Cardiac septum (tissue), 1 donor: ENCODE measurements at regions of chr4 and their contacts with region 1.

Region 1: DNA sequence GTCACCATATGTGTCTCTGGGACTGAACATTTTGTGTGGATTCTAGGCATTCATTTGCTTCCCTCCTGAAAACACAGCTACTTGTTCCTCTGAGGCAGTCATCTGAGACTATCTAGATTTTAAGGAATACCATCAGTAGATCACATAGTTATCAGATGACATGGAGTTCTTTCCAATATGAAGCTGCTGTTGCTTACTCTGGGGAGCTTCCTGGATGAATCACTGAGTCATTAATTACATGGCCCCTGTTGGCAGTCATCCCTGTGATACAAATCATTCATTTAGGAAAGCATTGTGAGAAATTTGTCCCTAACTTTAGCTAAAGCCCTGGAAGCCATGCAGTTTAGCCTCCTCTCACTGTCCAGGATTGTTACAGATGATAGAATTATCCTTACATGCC is 98.2 kb upstream of the ARSJ start:
- DNase-seq: no peak

Region 2: DNA sequence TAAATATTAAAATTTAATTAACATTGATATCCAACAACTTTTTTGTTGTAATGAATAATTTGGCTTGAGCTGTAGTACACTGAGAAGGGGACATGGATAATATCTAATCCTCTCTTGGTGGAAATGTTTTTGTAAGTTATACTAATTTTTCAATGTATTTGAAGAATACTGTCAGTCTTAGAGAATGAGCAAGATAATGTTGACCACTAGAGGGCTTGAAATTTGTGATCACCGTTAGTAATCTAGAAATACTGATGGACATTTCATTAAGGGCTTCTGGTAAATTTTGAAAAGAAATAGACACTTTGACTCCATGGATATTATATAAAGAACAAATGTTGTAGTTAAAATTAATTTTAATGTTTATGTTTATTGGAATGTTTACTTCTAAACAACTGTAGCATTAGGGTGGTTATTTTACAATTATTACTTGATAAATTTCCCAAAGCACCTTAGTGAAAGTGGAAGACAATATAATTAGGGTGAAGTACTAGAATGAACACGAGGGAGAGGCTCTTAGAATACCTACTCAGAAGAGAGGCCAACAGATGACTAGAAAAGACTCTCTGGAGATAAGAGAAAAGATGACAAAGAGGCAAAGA is 296.1 kb before region 1 on chr4:
- intact Hi-C with region 1: loop called (anchors 10 kb)
- DNase-seq: no peak

Region 3: GRCh38 chr4:113952452-113953029 is 125.1 kb before region 1 on chr4:
- intact Hi-C with region 1: loop called (anchors 5 kb)
- DNase-seq: no peak

Region 4: GRCh38 chr4:114161809-114162208 is 84.2 kb after region 1 on chr4:
- intact Hi-C with region 1: no loop called
- DNase-seq: no peak